ENCODE measurements at regions of chr18 and their contacts with region 1.

Region 1: GRCh38 chr18:74495581-74496507 is at the start of gene CNDP2:
- DNase-seq: peak; percentile 100
- H3K4me3 Mint-ChIP-seq: peak within 1 kb of the TSS; percentile 95
- H3K27ac Mint-ChIP-seq: peak within 1 kb of the TSS; percentile 100
- H3K4me1 Mint-ChIP-seq: peaks cover 38% of the 10 kb centered on the region
- H3K27me3 Mint-ChIP-seq: no peaks in the 10 kb centered on the region
- total RNA-seq, gene CNDP2: 144 to 147 TPM

Region 2: GRCh38 chr18:74196220-74197119 is 299.4 kb before region 1 on chr18:
- CTCF ChIA-PET with region 1: interaction called, 24 read pairs
- POLR2A ChIA-PET with region 1: no interaction called
- intact Hi-C with region 1: loop called (anchors 1 kb)
- DNase-seq: peak; percentile 59
- H3K4me3 Mint-ChIP-seq: peak overlapping the region; percentile 69
- H3K27ac Mint-ChIP-seq: peak overlapping the region; percentile 56
- H3K4me1 Mint-ChIP-seq: peaks cover 6% of the 10 kb centered on the region
- H3K27me3 Mint-ChIP-seq: peaks cover under 1% of the 10 kb centered on the region

Region 3: DNA sequence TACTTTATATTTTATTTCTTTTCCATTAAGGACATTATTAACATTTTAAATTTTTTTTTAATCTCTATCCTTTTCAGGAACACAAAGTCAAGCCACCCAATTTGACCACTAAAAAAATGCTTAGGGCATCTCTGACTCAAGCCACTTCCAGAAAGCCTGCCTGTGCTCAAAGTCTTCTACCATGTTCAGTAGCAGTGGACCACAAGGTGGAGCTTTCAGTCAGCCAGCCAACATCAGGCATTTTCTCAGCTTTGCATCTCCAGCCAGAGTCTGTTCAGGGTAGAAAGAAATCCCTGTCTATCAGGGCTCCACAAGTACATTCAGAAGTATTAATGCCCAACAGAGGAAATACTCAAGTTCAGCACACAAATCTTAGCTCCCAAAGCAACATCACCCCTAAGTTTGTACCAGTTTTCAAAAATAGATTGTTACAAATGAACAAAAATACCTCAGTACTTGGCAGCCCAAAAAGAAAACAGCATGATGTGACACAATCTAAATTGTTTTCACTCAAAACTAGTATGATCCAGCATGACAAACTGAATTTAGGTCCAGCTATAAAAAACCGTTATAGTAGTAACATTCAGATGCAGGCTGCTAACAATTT is 142.6 kb before region 1 on chr18:
- CTCF ChIA-PET with region 1: interaction called, 103 read pairs
- POLR2A ChIA-PET with region 1: no interaction called
- intact Hi-C with region 1: loop called (anchors 1 kb)
- DNase-seq: peak; percentile 58
- H3K4me3 Mint-ChIP-seq: no peak overlapping the region
- H3K27ac Mint-ChIP-seq: no peak overlapping the region
- H3K4me1 Mint-ChIP-seq: peaks cover 6% of the 10 kb centered on the region
- H3K27me3 Mint-ChIP-seq: peaks cover 1% of the 10 kb centered on the region

Region 4: DNA sequence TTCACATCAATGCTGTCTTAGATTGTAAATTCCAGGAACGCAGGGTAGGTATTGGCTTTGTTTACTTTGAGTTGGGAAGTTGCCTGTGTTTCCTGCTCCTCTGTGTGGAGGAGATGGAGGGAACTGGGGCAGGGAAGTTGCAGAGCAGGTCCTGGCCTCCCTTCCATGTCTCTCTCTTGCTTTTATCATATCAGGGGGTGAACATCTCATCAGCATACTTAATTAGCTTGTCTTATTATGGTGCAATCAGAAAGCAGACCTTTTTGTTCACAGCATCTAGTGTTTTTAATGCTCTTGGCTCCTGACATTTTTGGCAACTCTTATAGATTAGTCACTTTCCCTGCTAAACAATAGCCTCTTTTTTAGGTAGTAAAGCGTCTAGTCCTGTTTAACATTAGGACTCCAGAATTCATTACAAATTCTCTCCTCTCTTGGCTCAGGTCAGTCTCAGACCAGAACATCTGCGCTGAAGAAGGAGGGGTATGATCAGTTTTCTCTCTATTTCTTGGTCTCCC is 27.2 kb before region 1 on chr18:
- CTCF ChIA-PET with region 1: no interaction called
- POLR2A ChIA-PET with region 1: no interaction called
- intact Hi-C with region 1: no loop called
- DNase-seq: no peak
- H3K4me3 Mint-ChIP-seq: no peak overlapping the region
- H3K27ac Mint-ChIP-seq: no peak overlapping the region
- H3K4me1 Mint-ChIP-seq: no peaks in the 10 kb centered on the region
- H3K27me3 Mint-ChIP-seq: no peaks in the 10 kb centered on the region

Region 5: DNA sequence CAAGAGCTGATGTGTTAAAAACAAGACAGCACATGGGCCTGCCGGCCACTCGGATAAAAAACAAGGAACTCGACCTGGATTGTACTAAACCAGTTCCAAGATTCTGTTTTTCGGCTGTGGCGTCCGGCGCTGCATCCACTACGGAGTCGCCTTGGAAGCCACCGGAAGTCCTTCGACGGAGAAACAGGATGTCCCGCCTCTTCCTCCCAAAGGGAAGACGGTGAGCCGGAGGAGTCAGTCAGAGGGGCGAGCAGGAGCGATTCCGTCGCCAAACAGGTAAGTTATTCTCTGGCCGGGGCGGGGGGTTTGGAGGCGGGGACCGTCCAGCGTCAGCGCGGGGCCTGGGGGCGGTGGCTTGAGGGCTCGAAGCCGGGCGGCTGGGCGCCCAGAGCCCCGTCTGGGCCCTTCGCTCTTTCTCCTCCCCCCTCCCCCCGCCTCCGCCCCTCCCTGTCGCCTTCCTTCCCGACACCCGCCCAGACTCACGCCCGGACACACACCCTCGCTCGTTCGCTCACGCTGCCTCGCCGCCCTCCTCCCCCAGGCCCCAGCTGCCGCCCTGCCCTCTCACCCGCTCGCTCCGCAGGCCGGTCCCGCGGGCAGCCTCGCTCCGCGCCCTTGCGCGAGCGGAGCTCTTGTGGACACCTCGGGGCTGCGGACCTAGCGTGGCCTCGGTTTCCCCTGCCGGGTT is 102.0 kb after region 1 on chr18 and contains the start of gene ZNF407:
- CTCF ChIA-PET with region 1: no interaction called
- POLR2A ChIA-PET with region 1: interaction called, 4 read pairs
- intact Hi-C with region 1: loop called (anchors 1 kb)
- DNase-seq: peak; percentile 91
- H3K4me3 Mint-ChIP-seq: peak within 1 kb of the TSS; percentile 96
- H3K27ac Mint-ChIP-seq: peak within 1 kb of the TSS; percentile 99
- H3K4me1 Mint-ChIP-seq: peaks cover 41% of the 10 kb centered on the region
- H3K27me3 Mint-ChIP-seq: no peaks in the 10 kb centered on the region
- total RNA-seq, gene ZNF407: 10.0 to 10.5 TPM

Region 6: GRCh38 chr18:75247611-75248421 is 752.0 kb after region 1 on chr18:
- CTCF ChIA-PET with region 1: no interaction called
- POLR2A ChIA-PET with region 1: no interaction called
- intact Hi-C with region 1: loop called (anchors 5 kb)
- DNase-seq: no peak
- H3K4me3 Mint-ChIP-seq: peak overlapping the region; percentile 77
- H3K27ac Mint-ChIP-seq: peak overlapping the region; percentile 87
- H3K4me1 Mint-ChIP-seq: peaks cover 58% of the 10 kb centered on the region
- H3K27me3 Mint-ChIP-seq: no peaks in the 10 kb centered on the region